ENCODE measurements at regions of chr6 and their contacts with region 1.

Region 1: DNA sequence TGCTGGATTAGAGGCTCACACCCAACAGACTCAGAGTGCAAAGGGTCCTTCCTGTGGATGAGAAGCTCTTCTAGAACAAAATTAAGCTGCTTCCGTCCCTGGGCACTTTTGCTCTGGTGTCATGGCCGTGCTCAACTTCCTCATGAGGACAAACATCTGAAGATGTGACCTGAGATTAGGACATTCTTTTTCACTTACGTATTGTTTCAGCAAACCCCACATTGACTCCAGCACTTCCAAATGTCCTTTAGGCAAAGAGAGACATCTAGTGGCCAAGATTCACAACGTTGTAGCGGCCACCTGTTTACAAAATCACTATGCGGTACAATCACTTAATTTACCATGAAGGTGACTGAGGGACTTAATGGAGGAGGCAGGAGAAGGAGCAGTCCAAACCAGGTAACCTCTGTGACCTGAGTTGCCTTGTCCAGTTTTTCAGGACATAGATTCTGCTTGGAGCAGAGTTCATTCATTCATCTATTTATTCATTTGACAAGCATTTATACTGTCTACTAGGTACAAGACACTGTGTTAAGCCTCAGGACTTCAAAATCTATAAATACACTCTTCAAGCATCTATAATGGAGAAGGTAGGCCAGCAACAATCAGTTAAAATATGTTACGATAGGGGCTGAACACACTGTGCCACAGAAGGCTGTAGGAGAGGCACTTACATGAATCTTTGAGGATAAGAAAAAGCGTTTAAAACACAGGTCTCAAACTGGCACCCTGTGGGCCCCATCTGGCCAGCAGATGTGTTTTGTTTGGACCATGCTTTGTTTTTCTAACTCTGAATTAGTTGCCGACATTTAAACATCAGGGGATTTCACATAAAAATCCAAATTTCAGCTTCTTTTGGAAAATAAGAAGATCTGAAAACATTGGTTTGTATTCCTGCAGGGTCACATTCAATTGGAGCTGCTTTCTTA is 5.6 kb upstream of the ADGRF1 start:
- DNase-seq: peak; percentile 62 to 74
- H3K4me3 ChIP-seq: no peak overlapping the region
- H3K4me3 Mint-ChIP-seq: peak overlapping the region; percentile 37
- H3K27ac Mint-ChIP-seq: peak overlapping the region; percentile 46
- H3K4me1 ChIP-seq: peaks cover 12% of the 10 kb centered on the region
- H3K4me1 Mint-ChIP-seq: peaks cover 6% of the 10 kb centered on the region
- H3K27me3 ChIP-seq: no peaks in the 10 kb centered on the region
- H3K27me3 Mint-ChIP-seq: no peaks in the 10 kb centered on the region
- CTCF ChIP-seq: peak; percentile 78 to 79

Region 2: DNA sequence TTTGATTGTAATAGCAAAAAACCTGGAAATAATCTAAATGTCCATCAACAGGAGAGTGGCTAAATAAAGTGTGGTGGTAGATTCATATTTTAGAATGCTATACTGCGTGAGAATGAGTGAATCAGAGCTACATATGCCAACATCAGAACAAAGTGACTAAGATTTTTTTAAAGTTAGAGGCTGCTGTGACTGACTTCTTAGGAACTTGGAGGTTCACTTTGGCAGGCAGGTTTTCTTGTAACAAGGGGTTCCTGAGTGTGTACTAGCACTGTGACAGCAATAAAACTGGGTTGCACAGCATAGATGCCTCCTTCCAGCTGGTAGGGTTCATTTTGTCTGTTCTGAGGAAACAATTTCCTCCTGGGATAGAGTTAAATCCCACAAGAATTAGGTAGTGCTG is 801.7 kb before region 1 on chr6:
- CTCF ChIA-PET with region 1: no interaction called
- POLR2A ChIA-PET with region 1: no interaction called
- intact Hi-C with region 1: no loop called
- DNase-seq: no peak
- H3K4me3 ChIP-seq: no peak overlapping the region
- H3K4me3 Mint-ChIP-seq: no peak overlapping the region
- H3K27ac Mint-ChIP-seq: no peak overlapping the region
- H3K4me1 ChIP-seq: no peaks in the 10 kb centered on the region
- H3K4me1 Mint-ChIP-seq: no peaks in the 10 kb centered on the region
- H3K27me3 ChIP-seq: no peaks in the 10 kb centered on the region
- H3K27me3 Mint-ChIP-seq: peaks cover 9% of the 10 kb centered on the region
- CTCF ChIP-seq: no peak

Region 3: GRCh38 chr6:46848684-46849360 is 198.9 kb before region 1 on chr6:
- CTCF ChIA-PET with region 1: interaction called, 6 read pairs
- POLR2A ChIA-PET with region 1: no interaction called
- intact Hi-C with region 1: loop called (anchors 1 kb)
- DNase-seq: peak; percentile 74 to 90
- H3K4me3 ChIP-seq: no peak overlapping the region
- H3K4me3 Mint-ChIP-seq: peak overlapping the region; percentile 55
- H3K27ac Mint-ChIP-seq: peak overlapping the region; percentile 2
- H3K4me1 ChIP-seq: no peaks in the 10 kb centered on the region
- H3K4me1 Mint-ChIP-seq: peaks cover 12% of the 10 kb centered on the region
- H3K27me3 ChIP-seq: no peaks in the 10 kb centered on the region
- H3K27me3 Mint-ChIP-seq: no peaks in the 10 kb centered on the region
- CTCF ChIP-seq: peak; percentile 94 to 95

Region 4: GRCh38 chr6:47007657-47008389 is 39.9 kb before region 1 on chr6:
- CTCF ChIA-PET with region 1: no interaction called
- POLR2A ChIA-PET with region 1: no interaction called
- intact Hi-C with region 1: loop called (anchors 1 kb)
- DNase-seq: no peak
- H3K4me3 ChIP-seq: no peak overlapping the region
- H3K4me3 Mint-ChIP-seq: no peak overlapping the region
- H3K27ac Mint-ChIP-seq: no peak overlapping the region
- H3K4me1 ChIP-seq: no peaks in the 10 kb centered on the region
- H3K4me1 Mint-ChIP-seq: no peaks in the 10 kb centered on the region
- H3K27me3 ChIP-seq: no peaks in the 10 kb centered on the region
- H3K27me3 Mint-ChIP-seq: no peaks in the 10 kb centered on the region
- CTCF ChIP-seq: no peak

Region 5: GRCh38 chr6:47073125-47074110 is 25.7 kb after region 1 on chr6:
- CTCF ChIA-PET with region 1: no interaction called
- POLR2A ChIA-PET with region 1: no interaction called
- intact Hi-C with region 1: no loop called
- DNase-seq: peak in 1 of 2 experiments; percentile 20
- H3K4me3 ChIP-seq: no peak overlapping the region
- H3K4me3 Mint-ChIP-seq: no peak overlapping the region
- H3K27ac Mint-ChIP-seq: no peak overlapping the region
- H3K4me1 ChIP-seq: peaks cover 9% of the 10 kb centered on the region; the same call in 1 of the 2 replicates
- H3K4me1 Mint-ChIP-seq: peaks cover 6% of the 10 kb centered on the region
- H3K27me3 ChIP-seq: no peaks in the 10 kb centered on the region
- H3K27me3 Mint-ChIP-seq: no peaks in the 10 kb centered on the region
- CTCF ChIP-seq: peak; percentile 16 to 39

Region 6: DNA sequence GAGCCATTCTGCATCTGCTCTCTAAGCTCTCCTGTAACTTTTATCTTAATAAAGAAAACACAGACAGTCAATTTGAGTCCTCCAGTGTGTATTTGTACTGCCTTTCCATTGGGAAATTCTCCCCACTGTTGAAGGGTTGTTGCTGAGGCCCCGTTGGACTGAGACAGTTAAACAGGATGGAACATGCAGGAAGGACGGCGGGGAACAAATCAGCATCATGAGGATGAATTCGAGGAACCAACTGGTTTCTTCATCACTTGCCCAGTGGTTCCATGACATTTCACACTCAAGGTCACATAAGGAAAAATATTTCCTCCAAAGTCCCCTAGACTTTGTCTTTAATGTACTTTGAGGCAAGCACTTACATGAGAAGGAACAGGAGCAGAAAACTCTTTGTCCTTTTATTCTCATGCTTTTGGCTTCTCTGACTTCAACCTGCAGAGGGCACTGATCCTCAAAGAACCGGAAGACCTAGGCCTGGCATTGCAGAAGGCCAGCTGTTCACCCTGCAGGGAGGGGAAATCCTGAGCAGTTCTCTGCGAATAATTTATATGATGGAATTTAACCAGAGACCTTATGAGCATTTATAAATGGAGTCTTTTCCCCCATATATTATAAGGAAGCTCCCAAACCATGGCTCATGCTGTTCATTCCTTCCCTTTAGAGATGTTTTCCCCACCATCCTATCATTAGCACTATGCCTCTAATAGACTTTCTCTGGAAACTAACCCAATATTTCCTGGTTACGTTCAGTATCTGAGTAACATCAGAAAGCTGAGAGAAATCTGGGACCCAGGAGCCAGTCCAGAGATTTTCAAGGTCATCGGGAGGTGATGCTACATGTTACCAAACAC is 49.6 kb after region 1 on chr6:
- CTCF ChIA-PET with region 1: no interaction called
- POLR2A ChIA-PET with region 1: no interaction called
- intact Hi-C with region 1: no loop called
- DNase-seq: peak; percentile 71 to 78
- H3K4me3 ChIP-seq: no peak overlapping the region
- H3K4me3 Mint-ChIP-seq: no peak overlapping the region
- H3K27ac Mint-ChIP-seq: no peak overlapping the region
- H3K4me1 ChIP-seq: peaks cover 54% of the 10 kb centered on the region
- H3K4me1 Mint-ChIP-seq: peaks cover 25% of the 10 kb centered on the region
- H3K27me3 ChIP-seq: no peaks in the 10 kb centered on the region
- H3K27me3 Mint-ChIP-seq: no peaks in the 10 kb centered on the region
- CTCF ChIP-seq: peak; percentile 77 to 80